Activated T-helper 1 cell treated with anti-CD3 and anti-CD28 coated beads, Interleukin-12 subunit alpha, Interleukin-12 subunit beta, Interleukin-2, Interleukin-4 antibody, amounts not matched to agents 30 ng/mL and 10 ng/mL and 1 ng/mL, durations not matched to agents 14 hours and 24 hours and 36 hours (primary cell): ENCODE measurements at regions of chr4 and their contacts with region 1.

Region 1: GRCh38 chr4:105215609-105216313 is 69.1 kb downstream of the TET2 start:
- DNase-seq: no peak
- H3K4me3 Mint-ChIP-seq: peak overlapping the region; percentile 23
- H3K27ac Mint-ChIP-seq: peak overlapping the region; percentile 46
- H3K4me1 Mint-ChIP-seq: peaks cover 20% of the 10 kb centered on the region
- H3K27me3 Mint-ChIP-seq: no peaks in the 10 kb centered on the region

Region 2: GRCh38 chr4:105179539-105180401 is 36.0 kb before region 1 on chr4:
- intact Hi-C with region 1: loop called (anchors 5 kb)
- DNase-seq: no peak
- H3K4me3 Mint-ChIP-seq: no peak overlapping the region
- H3K27ac Mint-ChIP-seq: no peak overlapping the region
- H3K4me1 Mint-ChIP-seq: peaks cover 12% of the 10 kb centered on the region
- H3K27me3 Mint-ChIP-seq: no peaks in the 10 kb centered on the region

Region 3: GRCh38 chr4:105191621-105192210 is 24.0 kb before region 1 on chr4:
- intact Hi-C with region 1: loop called (anchors 1 kb)
- DNase-seq: no peak
- H3K4me3 Mint-ChIP-seq: peak overlapping the region; percentile 8
- H3K27ac Mint-ChIP-seq: peak overlapping the region; percentile 74
- H3K4me1 Mint-ChIP-seq: peaks cover 53% of the 10 kb centered on the region
- H3K27me3 Mint-ChIP-seq: no peaks in the 10 kb centered on the region